K562 (cell line): ENCODE measurements at regions of chr6 and their contacts with region 1.

Region 1: GRCh38 chr6:13914351-13914750 is 10.4 kb upstream of the RNF182 start:
- DNase-seq: no peak
- ATAC-seq: no peak
- H3K4me3 ChIP-seq: no peak overlapping the region
- H3K27ac ChIP-seq: no peak overlapping the region
- H3K4me1 ChIP-seq: peaks cover 21 to 60% of the 10 kb centered on the region in 2 experiments
- H3K27me3 ChIP-seq: no peaks in the 10 kb centered on the region
- CTCF ChIP-seq: no peak
- EP300 ChIP-seq: no peak
- POLR2A ChIP-seq: no peak
- RAD21 ChIP-seq: no peak

Region 2: GRCh38 chr6:12990162-12990561 is 924.2 kb before region 1 on chr6:
- CTCF ChIA-PET with region 1: no interaction called
- POLR2A ChIA-PET with region 1: no interaction called
- in situ Hi-C with region 1: no loop called
- intact Hi-C with region 1: no loop called
- DNase-seq: no peak
- ATAC-seq: no peak
- H3K4me3 ChIP-seq: no peak overlapping the region
- H3K27ac ChIP-seq: no peak overlapping the region
- H3K4me1 ChIP-seq: no peaks in the 10 kb centered on the region
- H3K27me3 ChIP-seq: peaks cover 5 to 9% of the 10 kb centered on the region in 2 experiments; a peak in 4 of 5 replicates
- CTCF ChIP-seq: no peak
- EP300 ChIP-seq: no peak
- POLR2A ChIP-seq: no peak
- RAD21 ChIP-seq: no peak

Region 3: DNA sequence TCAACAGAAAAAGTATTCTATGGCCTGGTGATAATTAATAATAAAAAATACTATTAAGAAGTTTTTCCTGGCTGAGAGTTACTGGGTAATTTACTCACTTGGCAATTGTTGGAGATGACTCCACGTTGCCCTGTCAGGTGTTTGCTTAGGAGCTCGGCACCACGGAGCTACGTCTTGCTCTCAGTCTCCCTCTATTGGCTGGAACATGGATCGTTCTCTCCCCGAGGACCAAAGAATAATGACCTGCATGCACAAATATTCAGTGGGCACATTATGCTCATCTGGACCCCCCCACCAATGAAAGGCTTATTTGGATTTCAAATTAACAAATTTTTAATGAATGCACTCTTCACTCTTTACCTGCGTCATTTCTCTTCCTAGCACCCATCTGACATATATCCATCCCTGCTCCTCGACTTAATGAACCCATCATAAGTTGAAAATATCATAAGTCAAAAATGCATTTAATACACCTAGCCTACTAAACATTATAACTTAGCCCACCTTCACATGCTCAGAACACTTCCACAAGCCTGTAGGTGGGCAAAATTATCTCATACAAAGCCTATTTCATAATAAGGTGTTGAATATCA is 132.2 kb after region 1 on chr6:
- CTCF ChIA-PET with region 1: interaction called, 20 read pairs
- POLR2A ChIA-PET with region 1: interaction called, 4 read pairs
- in situ Hi-C with region 1: no loop called
- intact Hi-C with region 1: loop called (anchors 1 kb)
- DNase-seq: peak; percentile 70 to 81 (median 76)
- ATAC-seq: peak; percentile 92
- H3K4me3 ChIP-seq: no peak overlapping the region
- H3K27ac ChIP-seq: no peak overlapping the region
- H3K4me1 ChIP-seq: no peaks in the 10 kb centered on the region; a peak in 1 of 5 replicates
- H3K27me3 ChIP-seq: no peaks in the 10 kb centered on the region
- CTCF ChIP-seq: peak; percentile 80 to 84 (median 81)
- EP300 ChIP-seq: no peak
- POLR2A ChIP-seq: no peak
- RAD21 ChIP-seq: peak; percentile 68 to 83

Region 4: GRCh38 chr6:14059791-14060444 is 145.6 kb after region 1 on chr6:
- CTCF ChIA-PET with region 1: interaction called, 34 read pairs
- POLR2A ChIA-PET with region 1: interaction called, 3 read pairs
- in situ Hi-C with region 1: loop called (anchors 5 kb)
- intact Hi-C with region 1: no loop called
- DNase-seq: no peak
- ATAC-seq: no peak
- H3K4me3 ChIP-seq: no peak overlapping the region
- H3K27ac ChIP-seq: no peak overlapping the region
- H3K4me1 ChIP-seq: no peaks in the 10 kb centered on the region; a peak in 1 of 5 replicates
- H3K27me3 ChIP-seq: no peaks in the 10 kb centered on the region; a peak in 1 of 5 replicates
- CTCF ChIP-seq: no peak
- EP300 ChIP-seq: no peak
- POLR2A ChIP-seq: no peak
- RAD21 ChIP-seq: no peak

Region 5: DNA sequence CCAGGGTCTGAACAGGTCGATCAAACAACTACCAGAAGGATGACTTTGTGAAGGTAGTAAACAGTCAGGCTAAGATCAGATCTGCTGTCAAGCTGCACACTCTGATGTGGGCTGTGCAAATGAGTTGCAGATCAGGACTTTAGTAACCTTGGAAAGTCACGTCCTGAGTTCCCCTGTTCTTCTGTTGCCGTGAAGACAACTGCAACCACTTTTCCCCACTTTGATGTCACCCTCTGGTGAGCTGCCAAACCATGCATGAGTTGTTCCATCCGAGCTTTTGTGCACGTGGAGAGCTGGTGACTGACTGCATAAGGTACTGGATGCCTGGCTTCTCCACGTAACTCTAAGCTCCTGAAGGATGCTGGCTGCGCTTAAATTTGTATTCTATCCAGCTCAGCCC is 314.2 kb after region 1 on chr6:
- CTCF ChIA-PET with region 1: no interaction called
- POLR2A ChIA-PET with region 1: no interaction called
- in situ Hi-C with region 1: no loop called
- intact Hi-C with region 1: no loop called
- DNase-seq: no peak
- ATAC-seq: no peak
- H3K4me3 ChIP-seq: no peak overlapping the region
- H3K27ac ChIP-seq: no peak overlapping the region
- H3K4me1 ChIP-seq: no peaks in the 10 kb centered on the region; a peak in 1 of 5 replicates
- H3K27me3 ChIP-seq: peaks cover 45 to 54% of the 10 kb centered on the region in 2 experiments
- CTCF ChIP-seq: no peak
- EP300 ChIP-seq: no peak
- POLR2A ChIP-seq: no peak
- RAD21 ChIP-seq: no peak

Region 6: DNA sequence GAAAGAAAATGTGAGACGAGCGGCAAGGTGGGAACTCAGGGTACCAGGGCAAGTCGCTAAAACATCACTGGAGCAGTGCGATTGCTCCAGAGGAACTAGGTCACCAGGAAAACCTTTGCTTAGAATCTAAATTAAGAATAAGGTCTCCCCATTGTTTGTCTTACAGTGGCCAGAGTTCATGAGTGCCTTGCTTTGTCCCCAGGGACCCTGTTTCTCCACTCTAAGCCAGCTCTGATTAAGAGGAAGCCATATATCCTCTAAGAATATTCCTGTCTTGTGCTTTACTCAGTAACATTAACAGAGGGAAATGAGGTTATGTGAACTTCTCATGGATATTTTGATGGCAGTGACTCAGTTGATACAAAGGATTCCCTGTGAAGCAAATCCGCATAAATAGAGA is 509.0 kb after region 1 on chr6:
- CTCF ChIA-PET with region 1: no interaction called
- POLR2A ChIA-PET with region 1: no interaction called
- in situ Hi-C with region 1: no loop called
- intact Hi-C with region 1: no loop called
- DNase-seq: no peak
- ATAC-seq: no peak
- H3K4me3 ChIP-seq: no peak overlapping the region
- H3K27ac ChIP-seq: no peak overlapping the region
- H3K4me1 ChIP-seq: no peaks in the 10 kb centered on the region; a peak in 2 of 5 replicates
- H3K27me3 ChIP-seq: no peaks in the 10 kb centered on the region
- CTCF ChIP-seq: no peak
- EP300 ChIP-seq: no peak
- POLR2A ChIP-seq: no peak
- RAD21 ChIP-seq: no peak